Activated T-helper 2 cell treated with anti-CD3 and anti-CD28 coated beads, Interferon-gamma antibody, Interleukin-2, Interleukin-4, amounts not matched to agents 10 μg/mL and 5 μg/mL and 100 μg/mL, durations not matched to agents 14 hours and 24 hours and 36 hours (primary cell): ENCODE measurements at regions of chr11 and their contacts with region 1.

Region 1: DNA sequence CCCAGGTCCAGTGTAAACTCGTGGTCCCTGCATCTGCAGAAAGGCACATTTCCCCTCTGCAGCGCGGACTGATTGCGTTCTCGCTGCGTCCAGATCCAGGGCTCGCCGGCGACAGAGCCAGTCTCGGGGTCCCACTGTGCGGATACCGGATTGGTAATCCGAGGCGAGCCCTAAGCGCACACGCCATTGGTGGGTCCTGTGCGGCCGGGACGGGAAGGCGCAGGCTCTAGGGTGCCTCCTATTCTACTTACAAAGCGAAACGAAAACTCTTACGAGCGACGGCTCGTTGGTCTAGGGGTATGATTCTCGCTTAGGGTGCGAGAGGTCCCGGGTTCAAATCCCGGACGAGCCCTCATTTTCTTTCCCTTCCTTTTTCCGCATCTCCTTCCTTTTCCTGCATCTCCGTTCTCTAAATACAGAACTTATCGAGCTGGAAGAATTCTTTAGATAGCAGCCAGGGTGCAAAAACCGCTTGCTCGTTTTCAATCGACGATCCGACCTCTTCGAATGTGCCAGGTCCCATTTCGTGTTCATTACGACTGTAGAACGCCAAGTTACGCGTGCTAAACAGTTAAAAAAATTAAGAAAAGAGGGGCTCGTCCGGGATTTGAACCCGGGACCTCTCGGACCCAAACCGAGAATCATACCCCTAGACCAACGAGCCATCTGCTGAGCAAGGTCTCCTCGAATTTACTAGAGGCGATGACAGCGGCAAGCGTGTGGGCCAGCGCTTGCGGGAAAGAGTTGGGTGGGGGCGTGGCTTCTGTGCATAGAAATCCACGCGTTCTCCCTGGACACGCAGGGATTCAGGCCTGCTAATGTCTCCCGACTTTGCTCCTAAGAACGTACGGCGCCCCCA is 29.2 kb upstream of the WNT11 start:
- DNase-seq: peak; percentile 86
- H3K4me3 Mint-ChIP-seq: peak overlapping the region; percentile 89
- H3K27ac Mint-ChIP-seq: peak overlapping the region; percentile 90
- H3K4me1 Mint-ChIP-seq: peaks cover 49% of the 10 kb centered on the region
- H3K27me3 Mint-ChIP-seq: peaks cover 15% of the 10 kb centered on the region

Region 2: DNA sequence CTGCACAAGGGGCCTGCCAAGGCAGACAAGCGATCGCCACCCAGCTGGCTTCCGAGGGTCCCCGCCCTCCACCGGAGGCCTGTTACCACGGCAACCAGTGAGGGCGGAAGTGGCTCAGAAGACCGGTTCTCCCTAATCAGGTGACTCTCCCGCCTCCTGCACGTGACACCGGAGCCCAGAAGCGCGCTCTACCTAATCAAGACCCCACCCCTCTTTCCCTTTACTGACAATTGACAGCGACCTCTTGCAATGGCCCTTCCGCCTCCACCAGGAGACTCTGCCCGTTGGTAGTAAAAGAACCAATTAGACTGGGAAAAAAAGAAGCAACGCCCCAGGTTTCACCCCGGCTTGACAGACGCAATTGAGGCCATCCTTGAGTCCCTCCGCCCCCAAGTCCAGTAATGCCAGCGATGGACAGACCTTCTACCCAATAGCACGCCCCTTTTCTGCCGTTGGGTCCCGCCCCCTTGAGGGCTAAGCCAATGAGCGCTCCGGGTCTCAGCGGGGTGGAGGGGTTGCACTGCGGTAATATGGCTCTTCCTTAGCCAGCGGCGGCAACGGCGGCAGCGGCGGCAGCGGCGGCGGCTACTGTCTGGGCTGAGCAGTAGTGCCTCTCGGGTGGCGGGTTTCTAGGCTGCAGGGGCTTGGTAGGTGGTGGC is 420.6 kb before region 1 on chr11 and contains the start of gene UVRAG:
- intact Hi-C with region 1: loop called (anchors 10 kb)
- DNase-seq: peak; percentile 98
- H3K4me3 Mint-ChIP-seq: no peak within 1 kb of the TSS
- H3K27ac Mint-ChIP-seq: peak within 1 kb of the TSS; percentile 92
- H3K4me1 Mint-ChIP-seq: peaks cover 13% of the 10 kb centered on the region
- H3K27me3 Mint-ChIP-seq: no peaks in the 10 kb centered on the region
- total RNA-seq, gene UVRAG: 23.3 and 23.5 TPM in 2 replicates

Region 3: DNA sequence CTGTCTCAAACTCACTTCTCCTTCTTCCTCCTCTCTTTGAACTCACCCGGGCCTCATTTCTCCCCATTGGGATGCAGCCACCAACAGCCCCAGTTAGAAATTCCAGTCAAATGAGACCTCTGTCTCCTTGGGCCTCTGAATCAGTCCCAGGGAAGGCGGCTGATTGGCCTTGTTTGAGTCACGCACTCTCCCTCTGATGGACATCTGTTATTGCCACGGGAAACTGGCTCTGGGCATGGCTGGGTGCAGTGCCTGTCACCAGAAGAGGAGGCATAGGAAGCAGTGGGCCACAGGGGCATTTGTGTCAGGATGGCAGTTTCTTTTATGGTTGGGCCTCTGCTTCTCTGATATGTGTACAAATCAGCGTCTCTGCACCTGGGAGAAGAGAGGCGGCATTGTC is 19.5 kb before region 1 on chr11:
- intact Hi-C with region 1: no loop called
- DNase-seq: no peak
- H3K4me3 Mint-ChIP-seq: no peak overlapping the region
- H3K27ac Mint-ChIP-seq: no peak overlapping the region
- H3K4me1 Mint-ChIP-seq: no peaks in the 10 kb centered on the region
- H3K27me3 Mint-ChIP-seq: peaks cover 41% of the 10 kb centered on the region

Region 4: DNA sequence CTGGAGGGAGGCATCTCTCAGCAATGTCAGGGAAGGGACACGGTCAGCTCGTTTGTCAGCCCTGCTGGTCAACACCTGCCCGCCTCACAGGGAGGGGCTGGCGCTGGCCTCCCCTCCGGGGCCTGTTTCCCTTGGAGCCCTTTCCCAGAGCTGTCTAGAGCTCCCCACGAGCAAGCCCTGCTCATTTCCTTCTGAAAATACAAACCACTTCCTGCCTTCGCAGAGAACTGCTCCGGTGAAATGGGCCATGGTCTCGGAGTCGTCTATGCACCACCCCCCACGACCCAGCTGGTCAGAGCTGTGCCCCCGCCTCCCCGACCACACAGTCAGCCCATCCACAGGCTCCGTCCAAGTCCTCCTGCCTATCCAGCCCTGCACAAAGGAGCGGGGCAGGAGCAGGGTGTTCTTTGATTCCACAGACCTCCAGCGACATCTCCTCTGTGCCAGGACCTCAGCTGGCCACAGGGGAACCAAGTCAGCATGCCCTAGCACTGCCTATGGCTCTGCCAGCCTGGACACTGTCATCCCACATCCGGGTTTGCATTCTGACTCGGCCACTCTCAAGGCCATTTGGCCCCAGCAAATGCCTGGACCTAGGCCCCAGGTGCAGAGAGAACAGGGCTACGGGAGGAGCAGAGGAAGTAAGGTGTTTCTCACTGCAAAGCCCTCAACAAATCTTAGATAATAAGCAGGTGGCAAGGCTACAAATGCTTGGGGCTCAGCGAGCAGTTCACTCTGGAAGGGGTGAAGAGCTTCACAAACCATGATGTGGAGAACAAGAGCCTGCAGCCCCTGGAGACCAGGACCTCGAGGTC is 52.9 kb after region 1 on chr11:
- intact Hi-C with region 1: loop called (anchors 5 kb)
- DNase-seq: peak; percentile 10
- H3K4me3 Mint-ChIP-seq: no peak overlapping the region
- H3K27ac Mint-ChIP-seq: peak overlapping the region; percentile 53
- H3K4me1 Mint-ChIP-seq: peaks cover 19% of the 10 kb centered on the region
- H3K27me3 Mint-ChIP-seq: peaks cover 4% of the 10 kb centered on the region

Region 5: DNA sequence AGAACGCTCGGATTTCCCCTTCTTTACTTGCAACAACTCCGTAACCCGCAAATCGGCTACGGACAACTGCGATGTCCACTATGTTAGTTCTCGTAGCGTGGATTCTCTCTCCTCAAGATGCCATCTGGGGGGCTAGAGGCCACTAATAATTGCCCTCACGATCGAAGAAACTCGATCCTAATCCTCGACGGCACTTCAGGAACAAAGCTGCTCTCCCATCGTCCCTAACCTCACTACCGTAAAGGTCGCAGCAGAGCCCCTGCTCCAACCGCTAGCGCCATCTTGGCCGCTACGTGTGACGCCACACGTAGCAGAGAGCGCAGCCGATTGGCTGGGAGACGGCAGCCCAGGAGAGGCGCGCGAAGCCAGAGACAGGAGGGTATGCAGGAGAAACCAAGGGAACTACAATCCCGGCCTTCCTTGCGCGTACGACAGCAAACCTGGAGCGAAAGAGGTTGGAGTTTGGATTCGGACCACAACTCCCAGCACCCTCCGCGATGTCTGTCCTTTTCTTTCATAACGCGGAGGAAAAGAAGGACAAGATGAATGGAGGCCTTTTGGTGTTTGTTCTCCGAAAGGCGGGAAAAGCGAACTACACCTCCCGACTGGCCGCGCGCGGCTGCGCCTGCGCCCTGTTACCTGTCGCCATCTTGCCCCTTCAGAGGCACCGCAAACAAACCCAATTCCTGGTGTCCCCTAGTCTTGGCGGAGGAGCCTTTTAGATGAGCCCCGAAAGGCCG is 209.1 kb after region 1 on chr11 and contains the start of gene EMSY:
- intact Hi-C with region 1: loop called (anchors 1 kb)
- DNase-seq: peak; percentile 93
- H3K4me3 Mint-ChIP-seq: peak within 1 kb of the TSS; percentile 95
- H3K27ac Mint-ChIP-seq: peak within 1 kb of the TSS; percentile 97
- H3K4me1 Mint-ChIP-seq: peaks cover 24% of the 10 kb centered on the region
- H3K27me3 Mint-ChIP-seq: no peaks in the 10 kb centered on the region
- total RNA-seq, gene EMSY: 31.5 and 32.0 TPM in 2 replicates

Region 6: DNA sequence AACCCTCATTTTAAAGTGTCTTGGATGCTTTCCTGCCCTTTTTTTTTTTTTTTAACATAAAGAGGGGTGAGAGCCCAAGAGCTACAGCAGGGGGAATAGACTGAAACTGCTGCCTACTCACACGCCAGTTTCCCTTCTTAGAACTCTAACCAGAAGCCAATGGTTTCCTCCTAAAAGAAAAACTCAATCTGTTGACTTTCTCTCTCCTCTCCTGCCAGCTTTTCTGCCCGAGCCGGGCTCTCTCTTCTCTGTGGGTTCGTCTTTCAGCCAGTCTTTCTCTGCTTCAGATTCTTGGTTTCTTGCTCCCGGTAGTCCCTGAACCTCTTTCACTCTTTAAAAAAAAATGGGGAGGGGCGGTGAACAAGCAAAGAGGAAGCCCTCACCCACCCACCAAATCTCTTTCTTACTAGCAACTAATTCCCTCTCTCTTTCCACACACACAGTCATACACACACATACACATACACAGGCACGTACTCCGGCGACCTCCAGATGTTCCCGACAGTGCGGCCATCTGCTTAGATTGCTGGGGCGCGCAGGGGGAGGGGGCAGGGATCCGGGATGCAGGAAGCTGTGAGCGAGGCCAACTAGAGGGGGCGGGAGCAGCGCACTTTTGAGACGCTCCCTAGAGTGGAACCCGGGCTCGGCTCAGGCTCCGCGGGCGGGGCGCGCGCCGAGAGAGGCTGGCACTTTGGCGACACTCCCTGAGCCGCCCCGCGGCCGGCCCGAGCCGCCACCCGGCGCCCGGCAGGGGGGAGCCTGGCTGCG is 547.2 kb after region 1 on chr11:
- intact Hi-C with region 1: loop called (anchors 10 kb)
- DNase-seq: peak; percentile 60
- H3K4me3 Mint-ChIP-seq: peak overlapping the region; percentile 80
- H3K27ac Mint-ChIP-seq: peak overlapping the region; percentile 76
- H3K4me1 Mint-ChIP-seq: peaks cover 22% of the 10 kb centered on the region
- H3K27me3 Mint-ChIP-seq: peaks cover 20% of the 10 kb centered on the region